Ascending aorta (tissue), 2 donors: ENCODE measurements at regions of chr18 and their contacts with region 1.

Region 1: GRCh38 chr18:54607215-54607934 is 16.3 kb downstream of the DYNAP start:
- DNase-seq: no peak
- H3K4me3 ChIP-seq: no peak overlapping the region
- H3K27ac ChIP-seq: no peak overlapping the region
- H3K4me1 ChIP-seq: no peaks in the 10 kb centered on the region
- H3K27me3 ChIP-seq: no peaks in the 10 kb centered on the region
- CTCF ChIP-seq: no peak

Region 2: GRCh38 chr18:54558609-54559585 is 48.5 kb before region 1 on chr18:
- intact Hi-C with region 1: loop called (anchors 10 kb)
- DNase-seq: no peak
- H3K4me3 ChIP-seq: no peak overlapping the region
- H3K27ac ChIP-seq: no peak overlapping the region
- H3K4me1 ChIP-seq: no peaks in the 10 kb centered on the region
- H3K27me3 ChIP-seq: no peaks in the 10 kb centered on the region
- CTCF ChIP-seq: peak in 1 of 3 experiments; percentile 31